ENCODE measurements at regions of chr17 and their contacts with region 1.

Region 1: DNA sequence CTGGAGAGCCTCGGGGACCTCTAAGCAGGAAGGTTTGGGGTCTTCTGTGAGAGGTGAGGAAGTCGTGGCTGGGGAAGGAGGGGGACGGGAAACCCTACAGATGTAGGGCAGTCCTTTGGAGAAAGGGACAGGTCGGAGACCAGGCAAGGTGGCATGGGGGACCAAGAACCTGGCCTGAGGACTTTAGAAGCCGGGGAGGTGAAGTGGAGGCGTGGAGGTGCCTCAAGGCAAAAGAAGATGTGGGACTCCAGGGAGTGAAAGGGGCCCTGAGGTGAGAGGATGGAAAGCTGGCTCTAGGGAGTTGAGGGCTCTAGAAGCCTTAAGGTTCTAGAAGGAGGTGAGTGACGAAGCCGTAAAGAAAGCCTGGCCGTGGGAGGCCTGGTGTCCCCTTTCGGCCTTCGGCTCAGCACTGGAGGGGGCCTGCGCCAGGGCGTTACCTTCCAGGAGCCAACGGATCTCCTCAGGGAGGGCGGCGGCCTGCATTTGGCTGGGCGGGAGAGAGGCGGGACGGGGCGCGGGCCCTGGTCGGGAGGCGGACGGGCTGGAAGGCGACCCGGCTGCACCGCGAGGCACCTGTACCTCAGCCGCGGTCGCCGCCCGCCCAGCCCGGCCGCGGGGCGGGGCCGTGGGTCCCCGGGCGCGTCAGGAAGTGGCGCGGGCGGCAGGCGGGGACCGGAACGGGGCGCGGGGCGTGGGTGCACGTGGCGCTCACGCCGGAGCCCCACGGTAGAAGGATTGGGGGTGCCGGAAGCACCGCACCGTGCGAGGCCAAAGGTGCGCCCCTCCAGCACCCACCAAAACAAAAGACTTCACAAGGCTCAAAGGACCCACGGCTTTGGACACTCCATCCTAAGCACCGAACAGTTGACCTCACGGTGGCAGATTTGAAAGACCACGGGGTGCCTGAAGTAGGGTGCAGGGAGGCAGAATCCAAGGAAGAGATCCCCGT is at the start of gene SKAP1:
- DNase-seq: peak in 13 of 14 experiments; percentile 41 to 86 (median 62)
- ATAC-seq: peak; percentile 65
- H3K4me3 ChIP-seq: peak within 1 kb of the TSS; percentile 90
- H3K4me3 Mint-ChIP-seq: peak within 1 kb of the TSS; percentile 92
- H3K27ac ChIP-seq: peak within 1 kb of the TSS; percentile 88 to 95
- H3K27ac Mint-ChIP-seq: peak within 1 kb of the TSS; percentile 93
- H3K4me1 ChIP-seq: peaks cover 43% of the 10 kb centered on the region
- H3K4me1 Mint-ChIP-seq: peaks cover 95% of the 10 kb centered on the region
- H3K27me3 ChIP-seq: no peaks in the 10 kb centered on the region
- H3K27me3 Mint-ChIP-seq: no peaks in the 10 kb centered on the region
- CTCF ChIP-seq: no peak
- total RNA-seq, gene SKAP1: 92.0 to 95.1 TPM

Region 2: DNA sequence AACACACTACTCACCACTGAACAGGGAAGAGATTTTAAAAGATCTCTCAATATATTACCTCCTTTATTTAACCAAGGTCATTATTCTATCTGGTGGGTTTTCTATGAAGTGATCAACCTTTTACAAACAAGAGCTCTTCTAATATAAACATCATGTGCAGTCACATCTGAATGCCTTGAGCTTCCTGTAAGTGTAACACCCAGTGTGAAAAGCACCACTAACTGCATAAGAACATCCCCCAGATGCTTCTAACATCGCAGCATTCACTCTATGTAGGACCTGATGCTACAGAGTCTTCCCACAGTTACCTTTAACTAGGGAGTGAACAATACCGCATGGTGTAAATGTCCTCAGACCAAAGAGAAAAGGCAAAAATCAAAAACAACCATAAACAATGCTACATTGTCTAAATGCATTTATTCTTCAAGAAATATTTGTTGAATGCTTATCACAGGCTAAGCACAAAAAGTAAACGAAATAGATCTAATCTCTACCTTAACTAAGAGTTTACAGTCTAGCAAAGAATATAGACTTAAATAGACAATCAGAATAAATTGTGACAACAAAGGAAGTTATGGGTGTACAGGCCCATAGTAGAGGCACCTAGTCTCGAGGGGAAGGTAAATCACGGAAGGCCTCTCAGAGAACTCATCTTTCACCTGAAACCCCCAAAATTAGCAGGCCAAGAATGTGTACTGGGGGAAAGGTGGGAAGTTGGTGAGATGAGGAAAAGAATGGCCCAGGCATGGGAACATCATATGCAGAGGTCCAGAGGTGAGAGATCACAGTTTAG is 16.1 kb before region 1 on chr17:
- CTCF ChIA-PET with region 1: interaction called, 8 read pairs
- POLR2A ChIA-PET with region 1: interaction called, 15 read pairs
- intact Hi-C with region 1: loop called in 1 of 2 experiments (anchors 1 kb)
- DNase-seq: peak in 3 of 14 experiments; percentile 22 to 50 (median 28)
- ATAC-seq: peak; percentile 74
- H3K4me3 ChIP-seq: no peak overlapping the region
- H3K4me3 Mint-ChIP-seq: peak overlapping the region; percentile 57
- H3K27ac ChIP-seq: peak overlapping the region; percentile 59 to 63
- H3K27ac Mint-ChIP-seq: peak overlapping the region; percentile 86
- H3K4me1 ChIP-seq: peaks cover 49% of the 10 kb centered on the region
- H3K4me1 Mint-ChIP-seq: peaks cover 86% of the 10 kb centered on the region
- H3K27me3 ChIP-seq: no peaks in the 10 kb centered on the region
- H3K27me3 Mint-ChIP-seq: no peaks in the 10 kb centered on the region
- CTCF ChIP-seq: no peak

Region 3: GRCh38 chr17:48441231-48441711 is 11.4 kb after region 1 on chr17:
- CTCF ChIA-PET with region 1: interaction called, 4 read pairs
- POLR2A ChIA-PET with region 1: interaction called, 66 read pairs
- intact Hi-C with region 1: loop called (anchors 1 to 2 kb)
- DNase-seq: peak in 9 of 14 experiments; percentile 7 to 94 (median 31)
- ATAC-seq: peak; percentile 66
- H3K4me3 ChIP-seq: peak overlapping the region; percentile 1
- H3K4me3 Mint-ChIP-seq: peak overlapping the region; percentile 36
- H3K27ac ChIP-seq: peak overlapping the region; percentile 66 to 72
- H3K27ac Mint-ChIP-seq: peak overlapping the region; percentile 95
- H3K4me1 ChIP-seq: peaks cover 98% of the 10 kb centered on the region
- H3K4me1 Mint-ChIP-seq: peaks cover 94% of the 10 kb centered on the region
- H3K27me3 ChIP-seq: no peaks in the 10 kb centered on the region
- H3K27me3 Mint-ChIP-seq: no peaks in the 10 kb centered on the region
- CTCF ChIP-seq: no peak

Region 4: GRCh38 chr17:48767263-48767774 is 337.4 kb after region 1 on chr17:
- CTCF ChIA-PET with region 1: no interaction called
- POLR2A ChIA-PET with region 1: no interaction called
- intact Hi-C with region 1: no loop called
- DNase-seq: no peak
- ATAC-seq: no peak
- H3K4me3 ChIP-seq: no peak overlapping the region
- H3K4me3 Mint-ChIP-seq: no peak overlapping the region
- H3K27ac ChIP-seq: no peak overlapping the region
- H3K27ac Mint-ChIP-seq: no peak overlapping the region
- H3K4me1 ChIP-seq: no peaks in the 10 kb centered on the region
- H3K4me1 Mint-ChIP-seq: no peaks in the 10 kb centered on the region
- H3K27me3 ChIP-seq: peaks cover 20 to 33% of the 10 kb centered on the region in 2 experiments
- H3K27me3 Mint-ChIP-seq: peaks cover 79% of the 10 kb centered on the region
- CTCF ChIP-seq: no peak

Measured in CD4-positive, alpha-beta T cell (primary cell).